ENCODE measurements at regions of chr1 and their contacts with region 1.

Region 1: GRCh38 chr1:101238681-101239094 is 1.9 kb downstream of the S1PR1 start:
- DNase-seq: peak; percentile 90
- H3K4me3 Mint-ChIP-seq: peak overlapping the region; percentile 95
- H3K27ac Mint-ChIP-seq: peak overlapping the region; percentile 98
- H3K4me1 Mint-ChIP-seq: peaks cover 51% of the 10 kb centered on the region
- H3K27me3 Mint-ChIP-seq: no peaks in the 10 kb centered on the region

Region 2: GRCh38 chr1:100921109-100921706 is 317.5 kb before region 1 on chr1:
- CTCF ChIA-PET with region 1: interaction called, 47 read pairs
- POLR2A ChIA-PET with region 1: interaction called, 90 read pairs
- DNase-seq: no peak
- H3K4me3 Mint-ChIP-seq: no peak overlapping the region
- H3K27ac Mint-ChIP-seq: no peak overlapping the region
- H3K4me1 Mint-ChIP-seq: peaks cover 32% of the 10 kb centered on the region
- H3K27me3 Mint-ChIP-seq: no peaks in the 10 kb centered on the region

Region 3: GRCh38 chr1:101025657-101026504 is 212.8 kb before region 1 on chr1 and contains the start of gene DPH5:
- CTCF ChIA-PET with region 1: interaction called, 15 read pairs
- POLR2A ChIA-PET with region 1: interaction called, 82 read pairs
- DNase-seq: peak; percentile 91
- H3K4me3 Mint-ChIP-seq: peak within 1 kb of the TSS; percentile 97
- H3K27ac Mint-ChIP-seq: peak within 1 kb of the TSS; percentile 86
- H3K4me1 Mint-ChIP-seq: peaks cover 65% of the 10 kb centered on the region
- H3K27me3 Mint-ChIP-seq: no peaks in the 10 kb centered on the region
- total RNA-seq, gene DPH5: 25.5 to 33.2 TPM

Region 4: GRCh38 chr1:101122452-101123166 is 116.1 kb before region 1 on chr1:
- CTCF ChIA-PET with region 1: interaction called, 18 read pairs
- POLR2A ChIA-PET with region 1: interaction called, 54 read pairs
- DNase-seq: peak; percentile 34
- H3K4me3 Mint-ChIP-seq: peak overlapping the region; percentile 33
- H3K27ac Mint-ChIP-seq: peak overlapping the region; percentile 80
- H3K4me1 Mint-ChIP-seq: peaks cover 60% of the 10 kb centered on the region
- H3K27me3 Mint-ChIP-seq: peaks cover 4% of the 10 kb centered on the region

Region 5: DNA sequence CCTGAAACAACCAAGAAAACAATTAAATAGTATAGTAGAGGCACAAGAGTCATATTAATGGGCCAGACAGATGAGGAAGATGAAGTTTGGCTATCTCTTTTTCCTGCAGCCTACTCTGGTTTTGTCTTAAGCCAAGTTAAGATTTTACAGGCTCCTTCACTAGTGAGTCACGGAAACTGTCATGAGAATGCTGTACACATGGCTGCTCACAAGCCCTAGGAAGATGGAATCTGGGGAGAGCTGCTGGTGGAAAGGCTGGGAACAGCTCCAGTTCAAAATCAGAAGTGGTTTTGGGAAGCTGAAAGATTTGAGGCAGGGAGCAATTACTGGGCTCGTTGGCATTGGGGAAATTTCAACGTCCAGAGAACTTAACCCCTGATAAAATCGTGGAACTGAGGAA is 48.2 kb before region 1 on chr1:
- CTCF ChIA-PET with region 1: interaction called, 5 read pairs
- POLR2A ChIA-PET with region 1: interaction called, 32 read pairs
- DNase-seq: no peak
- H3K4me3 Mint-ChIP-seq: no peak overlapping the region
- H3K27ac Mint-ChIP-seq: no peak overlapping the region
- H3K4me1 Mint-ChIP-seq: peaks cover 24% of the 10 kb centered on the region
- H3K27me3 Mint-ChIP-seq: no peaks in the 10 kb centered on the region

Region 6: GRCh38 chr1:101257500-101258325 is 19.0 kb after region 1 on chr1:
- CTCF ChIA-PET with region 1: interaction called, 41 read pairs
- POLR2A ChIA-PET with region 1: interaction called, 144 read pairs
- DNase-seq: peak; percentile 64
- H3K4me3 Mint-ChIP-seq: no peak overlapping the region
- H3K27ac Mint-ChIP-seq: peak overlapping the region; percentile 63
- H3K4me1 Mint-ChIP-seq: peaks cover 58% of the 10 kb centered on the region
- H3K27me3 Mint-ChIP-seq: no peaks in the 10 kb centered on the region

Region 7: GRCh38 chr1:101357444-101357986 is 118.8 kb after region 1 on chr1:
- CTCF ChIA-PET with region 1: interaction called, 13 read pairs
- POLR2A ChIA-PET with region 1: interaction called, 10 read pairs
- DNase-seq: peak; percentile 70
- H3K4me3 Mint-ChIP-seq: no peak overlapping the region
- H3K27ac Mint-ChIP-seq: no peak overlapping the region
- H3K4me1 Mint-ChIP-seq: peaks cover 8% of the 10 kb centered on the region
- H3K27me3 Mint-ChIP-seq: peaks cover 18% of the 10 kb centered on the region